Calu3 (cell line): ENCODE measurements at regions of chr5 and their contacts with region 1.

Region 1: DNA sequence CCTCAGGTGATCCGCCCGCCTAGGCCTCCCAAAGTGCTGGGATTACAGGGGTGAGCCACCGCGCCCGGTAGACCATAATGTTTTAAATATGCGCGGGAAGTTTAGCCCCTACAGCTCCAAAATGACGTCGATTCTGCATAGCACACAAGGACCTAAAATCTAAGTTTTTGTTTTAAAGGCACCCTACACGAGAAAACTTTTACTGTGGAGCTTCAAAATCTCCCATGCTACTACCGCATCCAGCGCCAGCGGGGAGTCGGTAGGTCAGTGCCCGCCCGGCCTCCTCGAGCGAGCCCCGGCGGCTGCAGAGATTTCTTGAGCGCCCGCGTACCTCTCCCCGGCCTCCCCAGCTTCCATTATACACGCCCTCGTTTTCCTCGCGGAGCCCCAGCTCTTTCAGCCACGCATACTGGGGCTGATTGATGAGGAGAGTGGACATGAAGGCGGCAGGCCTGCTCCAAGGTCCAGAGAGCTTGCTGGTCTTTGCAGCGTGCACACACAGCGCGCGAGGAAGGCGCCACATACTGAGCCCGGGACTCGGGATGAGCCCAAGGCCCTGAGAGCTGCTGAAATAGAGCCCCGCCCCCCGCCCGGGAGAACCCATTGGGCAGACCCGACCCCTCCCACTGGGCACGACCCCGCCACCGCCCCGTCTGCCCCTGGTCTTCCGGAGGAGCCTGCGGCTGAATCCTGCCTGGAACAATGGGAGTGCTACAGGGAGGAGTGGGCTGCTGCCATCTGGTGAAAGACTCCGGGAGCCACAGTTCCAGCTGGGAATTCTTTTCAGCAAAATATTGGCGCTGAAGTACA is at the start of gene ALDH7A1:
- DNase-seq: peak; percentile 93
- H3K4me3 Mint-ChIP-seq: peak within 1 kb of the TSS; percentile 97
- H3K27ac Mint-ChIP-seq: peak within 1 kb of the TSS; percentile 97
- H3K4me1 Mint-ChIP-seq: peaks cover 14% of the 10 kb centered on the region
- H3K27me3 Mint-ChIP-seq: no peaks in the 10 kb centered on the region
- CTCF ChIP-seq: peak; percentile 45
- total RNA-seq, gene ALDH7A1: 78.0 and 108 TPM in 2 replicates

Region 2: GRCh38 chr5:126339215-126339805 is 255.6 kb before region 1 on chr5:
- CTCF ChIA-PET with region 1: interaction called, 9 read pairs
- intact Hi-C with region 1: loop called (anchors 1 kb)
- DNase-seq: peak; percentile 72
- H3K4me3 Mint-ChIP-seq: no peak overlapping the region
- H3K27ac Mint-ChIP-seq: no peak overlapping the region
- H3K4me1 Mint-ChIP-seq: peaks cover 7% of the 10 kb centered on the region
- H3K27me3 Mint-ChIP-seq: no peaks in the 10 kb centered on the region
- CTCF ChIP-seq: peak; percentile 75